ENCODE measurements at regions of chr12 and their contacts with region 1.

Region 1: DNA sequence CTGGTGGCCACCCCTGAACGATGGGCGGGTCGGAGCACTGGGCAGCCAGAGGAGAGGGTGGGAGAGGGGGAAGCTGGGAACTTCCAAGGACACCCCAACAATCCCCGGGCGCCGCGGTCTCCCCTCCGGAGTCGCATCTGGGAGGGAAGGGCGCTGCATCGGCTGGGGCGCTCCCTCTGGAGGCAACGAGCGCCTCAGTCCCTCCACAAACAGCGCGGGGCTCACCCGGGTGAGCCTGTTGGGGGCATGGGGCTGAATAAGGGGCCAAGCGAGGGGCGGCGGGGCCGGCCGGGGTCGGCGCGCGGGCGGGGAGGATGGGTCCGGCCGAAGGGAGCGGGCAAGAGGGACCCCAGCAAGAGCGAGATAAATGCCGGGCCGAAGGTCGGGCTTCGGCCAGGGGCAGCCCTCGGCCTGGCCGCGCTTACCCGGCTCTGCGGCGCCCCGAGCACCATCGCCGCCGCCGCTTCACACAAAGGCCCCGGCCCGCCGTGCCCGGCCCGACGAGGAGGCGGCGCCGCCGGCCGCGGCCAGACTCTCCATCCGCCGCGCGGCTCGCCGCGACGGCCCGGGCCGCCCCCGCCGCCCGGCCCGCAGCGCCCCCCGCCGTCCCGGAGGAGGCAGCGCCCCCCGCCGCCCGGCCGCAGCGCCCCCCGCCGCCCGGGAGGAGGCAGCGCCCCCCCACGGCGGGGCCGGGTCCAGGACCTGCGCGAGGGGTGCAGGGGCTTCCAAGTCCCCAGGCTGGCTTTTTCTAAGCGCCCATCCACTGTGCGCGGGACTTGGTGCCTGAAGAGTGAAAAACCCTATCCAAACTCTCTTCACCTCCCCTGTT is at the start of gene ZBTB39:
- DNase-seq: peak; percentile 99
- H3K4me3 ChIP-seq: peak within 1 kb of the TSS; percentile 89 to 100
- H3K27ac ChIP-seq: peak within 1 kb of the TSS; percentile 34 to 69; a peak in 2 of 4 replicates
- H3K4me1 ChIP-seq: peaks cover 6 to 14% of the 10 kb centered on the region in 2 experiments; a peak in 3 of 4 replicates
- H3K27me3 ChIP-seq: no peaks in the 10 kb centered on the region
- CTCF ChIP-seq: peak; percentile 69
- EP300 ChIP-seq: no peak
- RAD21 ChIP-seq: no peak
- polyA plus RNA-seq, gene ZBTB39: 3.7 and 4.8 TPM in 2 replicates

Region 2: GRCh38 chr12:56751712-56752598 is 254.2 kb before region 1 on chr12 and contains the start of gene PRIM1:
- CTCF ChIA-PET with region 1: interaction called, 12 read pairs
- POLR2A ChIA-PET with region 1: no interaction called
- DNase-seq: peak; percentile 96
- H3K4me3 ChIP-seq: peak within 1 kb of the TSS; percentile 69 to 78
- H3K27ac ChIP-seq: peak within 1 kb of the TSS; percentile 44 to 72
- H3K4me1 ChIP-seq: no peaks in the 10 kb centered on the region; a peak in 1 of 4 replicates
- H3K27me3 ChIP-seq: no peaks in the 10 kb centered on the region
- CTCF ChIP-seq: no peak
- EP300 ChIP-seq: no peak
- RAD21 ChIP-seq: no peak
- polyA plus RNA-seq, gene PRIM1: 10.3 and 10.9 TPM in 2 replicates

Region 3: DNA sequence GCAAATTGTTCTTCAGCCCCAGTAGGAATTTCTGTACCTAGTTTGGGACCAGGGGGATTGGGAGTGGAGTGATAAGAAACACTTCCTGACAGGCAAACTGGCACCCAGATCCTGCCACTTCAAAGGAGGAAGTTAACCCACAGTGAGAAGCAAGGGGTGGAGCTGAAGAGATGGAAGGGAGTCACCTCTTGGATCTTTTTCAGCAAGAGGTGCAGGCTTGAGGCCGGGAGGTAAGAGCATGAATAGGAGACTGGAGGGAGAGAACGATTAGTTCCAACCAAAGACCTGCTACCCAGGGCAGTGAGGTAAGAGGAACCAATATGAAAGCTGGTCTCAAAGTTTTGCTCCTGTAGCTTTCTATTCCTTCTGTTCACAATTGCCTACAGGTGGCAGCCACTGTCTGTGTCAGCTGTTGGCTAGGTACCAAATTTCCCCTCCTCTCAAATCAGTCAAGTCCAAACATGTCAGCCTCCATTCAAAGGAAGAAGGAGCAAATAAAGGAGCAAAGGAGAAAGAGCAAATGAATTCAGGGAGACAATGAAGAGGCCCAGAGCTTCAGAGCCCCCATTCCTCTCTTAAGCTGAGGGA is 25.0 kb after region 1 on chr12:
- CTCF ChIA-PET with region 1: interaction called, 101 read pairs
- POLR2A ChIA-PET with region 1: no interaction called
- DNase-seq: no peak
- H3K4me3 ChIP-seq: no peak overlapping the region
- H3K27ac ChIP-seq: no peak overlapping the region
- H3K4me1 ChIP-seq: peaks cover 0 to 48% of the 10 kb centered on the region in 2 experiments; a peak in 2 of 4 replicates
- H3K27me3 ChIP-seq: peaks cover 5% of the 10 kb centered on the region; the same call in 1 of the 2 replicates
- CTCF ChIP-seq: no peak
- EP300 ChIP-seq: no peak
- RAD21 ChIP-seq: peak; percentile 43

Region 4: GRCh38 chr12:57046947-57047890 is 41.0 kb after region 1 on chr12:
- CTCF ChIA-PET with region 1: interaction called, 53 read pairs
- POLR2A ChIA-PET with region 1: no interaction called
- DNase-seq: no peak
- H3K4me3 ChIP-seq: no peak overlapping the region
- H3K27ac ChIP-seq: no peak overlapping the region
- H3K4me1 ChIP-seq: no peaks in the 10 kb centered on the region
- H3K27me3 ChIP-seq: no peaks in the 10 kb centered on the region; the same call in 1 of the 2 replicates
- CTCF ChIP-seq: no peak
- EP300 ChIP-seq: no peak
- RAD21 ChIP-seq: no peak

Region 5: DNA sequence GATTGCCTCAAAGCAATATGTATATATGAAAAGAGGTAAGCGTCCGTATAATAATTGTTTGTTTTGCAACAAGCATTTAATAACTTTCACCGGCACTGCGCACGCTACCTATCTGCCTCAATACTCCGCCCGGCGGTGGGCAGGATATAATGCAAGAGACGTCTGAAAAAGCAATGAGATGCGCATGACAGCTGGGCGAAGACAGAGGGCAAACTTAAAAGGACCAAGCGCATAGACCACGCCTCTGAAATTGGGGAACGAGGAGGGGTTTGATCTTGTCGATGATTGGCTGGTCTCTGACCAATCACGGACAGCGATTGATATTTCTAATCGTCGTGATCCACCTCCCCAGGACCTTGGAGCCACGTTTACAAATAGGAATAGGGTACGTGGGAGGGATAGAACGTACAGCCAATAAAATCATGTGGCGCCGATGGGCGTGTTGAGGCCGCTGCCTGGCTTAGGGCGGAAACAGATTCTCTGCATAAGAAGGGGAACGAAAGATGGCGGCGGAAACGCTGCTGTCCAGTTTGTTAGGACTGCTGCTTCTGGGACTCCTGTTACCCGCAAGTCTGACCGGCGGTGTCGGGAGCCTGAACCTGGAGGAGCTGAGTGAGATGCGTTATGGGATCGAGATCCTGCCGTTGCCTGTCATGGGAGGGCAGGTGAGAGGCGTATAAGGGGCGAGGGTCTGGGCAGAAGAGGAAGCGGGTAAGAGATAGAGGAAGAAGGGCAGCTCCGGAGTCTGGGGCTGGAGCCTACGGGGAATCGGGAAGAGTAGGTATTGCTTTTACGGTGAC is 687.7 kb after region 1 on chr12 and contains the start of gene OS9:
- CTCF ChIA-PET with region 1: no interaction called
- POLR2A ChIA-PET with region 1: no interaction called
- DNase-seq: peak; percentile 90
- H3K4me3 ChIP-seq: peak within 1 kb of the TSS; percentile 90
- H3K27ac ChIP-seq: peak within 1 kb of the TSS in 1 of 2 experiments; percentile 59; a peak in 2 of 4 replicates
- H3K4me1 ChIP-seq: peaks cover 0 to 7% of the 10 kb centered on the region in 2 experiments; a peak in 2 of 4 replicates
- H3K27me3 ChIP-seq: no peaks in the 10 kb centered on the region
- CTCF ChIP-seq: peak; percentile 71
- EP300 ChIP-seq: no peak
- RAD21 ChIP-seq: peak; percentile 56
- polyA plus RNA-seq, gene OS9: 280 and 362 TPM in 2 replicates